Activated naive CD4-positive, alpha-beta T cell treated with anti-CD3 and anti-CD28 coated beads for 36 hours (primary cell): ENCODE measurements at regions of chr12 and their contacts with region 1.

Region 1: GRCh38 chr12:54032627-54033100 is at the start of gene HOXC5:
- DNase-seq: peak; percentile 82
- H3K4me3 Mint-ChIP-seq: peak within 1 kb of the TSS; percentile 36
- H3K27ac Mint-ChIP-seq: no peak within 1 kb of the TSS
- H3K4me1 Mint-ChIP-seq: peaks cover 27% of the 10 kb centered on the region
- H3K27me3 Mint-ChIP-seq: peaks cover 73% of the 10 kb centered on the region
- total RNA-seq, gene HOXC5: not detected

Region 2: GRCh38 chr12:53770281-53770680 is 262.4 kb before region 1 on chr12:
- CTCF ChIA-PET with region 1: no interaction called
- intact Hi-C with region 1: no loop called
- DNase-seq: no peak
- H3K4me3 Mint-ChIP-seq: no peak overlapping the region
- H3K27ac Mint-ChIP-seq: no peak overlapping the region
- H3K4me1 Mint-ChIP-seq: no peaks in the 10 kb centered on the region
- H3K27me3 Mint-ChIP-seq: peaks cover 35% of the 10 kb centered on the region

Region 3: DNA sequence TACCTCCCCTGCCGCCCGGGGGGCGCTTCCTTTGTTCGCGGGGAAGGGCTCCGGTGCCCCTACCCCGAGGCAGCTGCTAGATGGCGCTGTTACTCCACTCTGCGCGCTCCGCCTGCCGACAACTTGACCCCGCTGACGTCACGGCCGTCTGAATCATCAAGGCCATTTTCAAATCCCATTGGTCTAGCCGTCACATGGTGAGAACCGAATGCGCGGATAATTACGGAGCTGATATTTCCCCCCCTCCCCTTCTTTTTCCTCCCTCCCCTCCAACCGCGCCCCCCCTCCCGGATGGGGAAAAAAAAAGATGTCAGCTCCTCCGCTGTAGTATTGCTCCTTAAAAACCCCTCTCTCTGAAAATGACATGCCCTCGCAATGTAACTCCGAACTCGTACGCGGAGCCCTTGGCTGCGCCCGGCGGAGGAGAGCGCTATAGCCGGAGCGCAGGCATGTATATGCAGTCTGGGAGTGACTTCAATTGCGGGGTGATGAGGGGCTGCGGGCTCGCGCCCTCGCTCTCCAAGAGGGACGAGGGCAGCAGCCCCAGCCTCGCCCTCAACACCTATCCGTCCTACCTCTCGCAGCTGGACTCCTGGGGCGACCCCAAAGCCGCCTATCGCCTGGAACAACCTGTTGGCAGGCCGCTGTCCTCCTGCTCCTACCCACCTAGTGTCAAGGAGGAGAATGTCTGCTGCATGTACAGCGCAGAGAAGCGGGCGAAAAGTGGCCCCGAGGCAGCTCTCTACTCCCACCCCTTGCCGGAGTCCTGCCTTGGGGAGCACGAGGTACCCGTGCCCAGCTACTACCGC is 47.6 kb before region 1 on chr12 and contains the start of gene HOXC10:
- CTCF ChIA-PET with region 1: interaction called, 8 read pairs
- intact Hi-C with region 1: loop called (anchors 1 kb)
- DNase-seq: peak; percentile 95
- H3K4me3 Mint-ChIP-seq: peak within 1 kb of the TSS; percentile 38
- H3K27ac Mint-ChIP-seq: no peak within 1 kb of the TSS
- H3K4me1 Mint-ChIP-seq: peaks cover 28% of the 10 kb centered on the region
- H3K27me3 Mint-ChIP-seq: peaks cover 91% of the 10 kb centered on the region
- total RNA-seq, gene HOXC10: not detected

Region 4: DNA sequence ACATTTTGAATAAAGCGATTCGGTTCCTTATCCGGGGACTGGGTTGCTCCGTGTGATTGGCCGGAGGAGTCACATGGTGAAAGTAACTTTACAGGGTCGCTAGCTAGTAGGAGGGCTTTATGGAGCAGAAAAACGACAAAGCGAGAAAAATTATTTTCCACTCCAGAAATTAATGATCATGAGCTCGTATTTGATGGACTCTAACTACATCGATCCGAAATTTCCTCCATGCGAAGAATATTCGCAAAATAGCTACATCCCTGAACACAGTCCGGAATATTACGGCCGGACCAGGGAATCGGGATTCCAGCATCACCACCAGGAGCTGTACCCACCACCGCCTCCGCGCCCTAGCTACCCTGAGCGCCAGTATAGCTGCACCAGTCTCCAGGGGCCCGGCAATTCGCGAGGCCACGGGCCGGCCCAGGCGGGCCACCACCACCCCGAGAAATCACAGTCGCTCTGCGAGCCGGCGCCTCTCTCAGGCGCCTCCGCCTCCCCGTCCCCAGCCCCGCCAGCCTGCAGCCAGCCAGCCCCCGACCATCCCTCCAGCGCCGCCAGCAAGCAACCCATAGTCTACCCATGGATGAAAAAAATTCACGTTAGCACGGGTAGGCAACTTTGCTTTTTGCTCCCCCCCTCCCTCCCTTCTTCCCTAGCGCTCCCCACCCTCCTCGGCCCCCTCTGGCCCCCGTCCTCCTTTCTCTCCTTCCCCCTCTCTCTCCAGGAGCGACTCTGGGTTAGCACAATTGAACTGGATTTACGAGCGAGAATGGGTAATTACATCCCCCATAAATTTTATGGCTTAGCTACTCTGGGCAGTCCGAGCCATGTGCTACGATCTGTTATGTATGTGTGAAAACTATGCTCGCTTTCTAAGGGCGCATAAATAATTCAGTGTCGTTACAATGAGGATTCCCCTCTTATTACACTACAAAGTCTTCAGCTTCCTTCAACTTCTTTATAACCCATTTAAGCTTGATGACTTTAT is 21.4 kb after region 1 on chr12 and contains the start of gene HOXC4:
- CTCF ChIA-PET with region 1: interaction called, 11 read pairs
- intact Hi-C with region 1: no loop called
- DNase-seq: no peak
- H3K4me3 Mint-ChIP-seq: peak within 1 kb of the TSS; percentile 38
- H3K27ac Mint-ChIP-seq: no peak within 1 kb of the TSS
- H3K4me1 Mint-ChIP-seq: peaks cover 21% of the 10 kb centered on the region
- H3K27me3 Mint-ChIP-seq: peaks cover 67% of the 10 kb centered on the region
- total RNA-seq, gene HOXC4: 0.12 TPM in 1 of 2 experiments, not detected in the other

Region 5: DNA sequence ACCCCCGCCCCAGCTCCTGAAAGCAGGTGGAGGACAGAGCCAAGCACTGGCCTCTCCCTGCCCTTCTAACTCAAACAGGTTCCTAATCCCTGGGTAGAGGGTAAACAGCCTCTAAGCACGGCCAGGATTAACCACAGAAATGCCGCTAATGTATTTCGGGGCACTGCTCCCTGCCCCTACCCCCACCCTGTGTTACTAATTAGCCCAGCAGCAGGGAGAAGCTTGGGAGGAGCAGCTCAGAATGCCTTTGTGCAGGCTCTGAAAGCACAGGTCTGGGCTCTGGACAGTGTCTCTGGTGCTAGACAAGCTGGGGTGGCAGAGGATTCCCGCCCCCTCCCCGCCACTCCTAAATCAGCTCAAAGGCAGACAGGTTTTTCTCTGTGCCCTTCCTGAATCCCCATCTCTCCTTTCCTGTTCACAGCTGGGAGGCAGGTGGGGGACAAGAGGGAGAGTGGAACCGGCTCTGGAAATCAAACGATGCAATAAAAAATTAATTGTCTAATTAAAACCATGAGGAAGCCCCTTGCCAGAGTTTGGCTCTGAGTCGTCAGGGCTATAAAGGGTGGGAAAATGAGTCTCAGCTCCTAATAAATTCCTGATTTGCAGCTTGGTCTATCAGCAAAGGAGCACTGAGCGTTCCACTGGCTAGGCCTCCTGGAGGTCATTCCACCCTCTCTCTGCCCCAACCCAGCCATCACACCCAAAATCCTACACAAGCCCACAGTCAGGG is 103.1 kb after region 1 on chr12:
- CTCF ChIA-PET with region 1: interaction called, 24 read pairs
- intact Hi-C with region 1: loop called (anchors 1 kb)
- DNase-seq: no peak
- H3K4me3 Mint-ChIP-seq: no peak overlapping the region
- H3K27ac Mint-ChIP-seq: no peak overlapping the region
- H3K4me1 Mint-ChIP-seq: no peaks in the 10 kb centered on the region
- H3K27me3 Mint-ChIP-seq: peaks cover 28% of the 10 kb centered on the region

Region 6: DNA sequence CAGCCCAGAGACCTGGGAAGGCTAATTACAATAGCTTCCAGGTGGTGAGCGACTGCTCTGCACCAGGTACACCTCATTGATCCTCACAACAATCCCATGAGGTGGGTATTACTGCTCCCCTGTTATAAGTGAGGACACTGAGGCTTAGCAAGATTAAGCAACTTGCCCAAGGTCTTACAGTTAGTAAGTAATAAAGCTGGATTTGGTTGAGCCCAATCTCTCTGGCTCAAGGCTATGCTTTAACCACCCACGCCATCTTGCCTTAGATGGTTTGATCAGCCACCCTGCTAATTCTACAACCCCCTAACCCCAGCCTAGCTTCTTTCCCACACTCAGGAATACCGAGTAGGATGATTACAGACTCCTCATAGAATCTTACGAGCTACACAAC is 151.7 kb after region 1 on chr12:
- CTCF ChIA-PET with region 1: interaction called, 113 read pairs
- intact Hi-C with region 1: no loop called
- DNase-seq: no peak
- H3K4me3 Mint-ChIP-seq: no peak overlapping the region
- H3K27ac Mint-ChIP-seq: no peak overlapping the region
- H3K4me1 Mint-ChIP-seq: peaks cover 10% of the 10 kb centered on the region
- H3K27me3 Mint-ChIP-seq: no peaks in the 10 kb centered on the region

Region 7: GRCh38 chr12:54201001-54201794 is 168.5 kb after region 1 on chr12:
- CTCF ChIA-PET with region 1: interaction called, 53 read pairs
- intact Hi-C with region 1: loop called (anchors 2 kb)
- DNase-seq: peak; percentile 75
- H3K4me3 Mint-ChIP-seq: no peak overlapping the region
- H3K27ac Mint-ChIP-seq: no peak overlapping the region
- H3K4me1 Mint-ChIP-seq: no peaks in the 10 kb centered on the region
- H3K27me3 Mint-ChIP-seq: peaks cover 40% of the 10 kb centered on the region